Esophagus squamous epithelium (tissue), 5 donors: ENCODE measurements at regions of chr22 and their contacts with region 1.

Region 1: DNA sequence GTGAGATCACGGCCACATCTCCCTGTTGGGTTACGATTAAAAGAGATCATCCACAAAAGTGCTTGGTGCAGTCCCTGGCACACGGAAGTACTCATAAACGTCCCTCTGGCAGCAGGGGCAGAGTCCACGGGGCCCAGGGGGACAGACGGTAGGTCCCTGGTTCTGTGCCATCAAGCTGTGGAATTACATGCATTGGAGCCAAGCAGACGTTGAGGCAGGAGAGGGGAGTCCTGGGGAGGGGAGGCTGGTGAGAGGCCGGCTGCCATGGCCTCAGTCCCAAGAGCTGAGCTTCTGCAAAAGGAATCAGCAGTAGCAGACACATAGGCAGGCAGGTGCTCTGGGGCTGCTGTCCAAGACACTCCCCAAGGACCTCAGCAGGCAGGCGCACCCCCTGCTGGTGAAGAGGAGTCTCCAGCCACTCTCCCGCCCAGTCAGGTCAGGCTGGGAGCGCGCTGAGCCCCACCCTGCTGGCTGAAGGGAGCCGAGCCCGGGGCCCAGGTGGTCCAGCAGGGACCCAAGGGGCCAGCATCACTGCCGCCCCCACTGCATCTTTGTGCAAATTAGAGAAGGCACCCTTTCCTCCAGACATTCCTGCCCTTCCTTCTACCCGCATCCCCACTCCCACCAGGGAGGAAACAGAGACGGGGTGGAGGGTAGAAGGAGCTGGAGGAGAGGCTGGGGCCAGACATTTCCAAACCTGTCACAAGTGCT is 7.6 kb upstream of the KCTD17 start:
- DNase-seq: no peak
- H3K4me3 ChIP-seq: no peak overlapping the region
- H3K27ac ChIP-seq: no peak overlapping the region
- H3K4me1 ChIP-seq: peaks cover 0 to 21% (median 11%) of the 10 kb centered on the region in 3 donors
- H3K27me3 ChIP-seq: peaks cover 0 to 4% (median 0%) of the 10 kb centered on the region in 4 donors
- CTCF ChIP-seq: peak; percentile 54 to 87 (median 74)
- POLR2A ChIP-seq: no peak

Region 2: GRCh38 chr22:36808761-36809224 is 235.2 kb before region 1 on chr22:
- intact Hi-C with region 1: no loop called
- DNase-seq: no peak
- H3K4me3 ChIP-seq: no peak overlapping the region
- H3K27ac ChIP-seq: no peak overlapping the region
- H3K4me1 ChIP-seq: no peaks in the 10 kb centered on the region
- H3K27me3 ChIP-seq: peaks cover 0 to 61% (median 0%) of the 10 kb centered on the region in 4 donors
- CTCF ChIP-seq: no peak
- POLR2A ChIP-seq: no peak

Region 3: GRCh38 chr22:36986242-36986821 is 57.7 kb before region 1 on chr22:
- intact Hi-C with region 1: loop called (anchors 10 kb)
- DNase-seq: no peak
- H3K4me3 ChIP-seq: no peak overlapping the region
- H3K27ac ChIP-seq: no peak overlapping the region
- H3K4me1 ChIP-seq: peaks cover 0 to 8% (median 4%) of the 10 kb centered on the region in 3 donors
- H3K27me3 ChIP-seq: peaks cover 0 to 73% (median 0%) of the 10 kb centered on the region in 4 donors
- CTCF ChIP-seq: peak in 5 of 6 experiments; percentile 47 to 85 (median 55)
- POLR2A ChIP-seq: no peak